CD4-positive, alpha-beta memory T cell (primary cell): ENCODE measurements at regions of chr19 and their contacts with region 1.

Region 1: DNA sequence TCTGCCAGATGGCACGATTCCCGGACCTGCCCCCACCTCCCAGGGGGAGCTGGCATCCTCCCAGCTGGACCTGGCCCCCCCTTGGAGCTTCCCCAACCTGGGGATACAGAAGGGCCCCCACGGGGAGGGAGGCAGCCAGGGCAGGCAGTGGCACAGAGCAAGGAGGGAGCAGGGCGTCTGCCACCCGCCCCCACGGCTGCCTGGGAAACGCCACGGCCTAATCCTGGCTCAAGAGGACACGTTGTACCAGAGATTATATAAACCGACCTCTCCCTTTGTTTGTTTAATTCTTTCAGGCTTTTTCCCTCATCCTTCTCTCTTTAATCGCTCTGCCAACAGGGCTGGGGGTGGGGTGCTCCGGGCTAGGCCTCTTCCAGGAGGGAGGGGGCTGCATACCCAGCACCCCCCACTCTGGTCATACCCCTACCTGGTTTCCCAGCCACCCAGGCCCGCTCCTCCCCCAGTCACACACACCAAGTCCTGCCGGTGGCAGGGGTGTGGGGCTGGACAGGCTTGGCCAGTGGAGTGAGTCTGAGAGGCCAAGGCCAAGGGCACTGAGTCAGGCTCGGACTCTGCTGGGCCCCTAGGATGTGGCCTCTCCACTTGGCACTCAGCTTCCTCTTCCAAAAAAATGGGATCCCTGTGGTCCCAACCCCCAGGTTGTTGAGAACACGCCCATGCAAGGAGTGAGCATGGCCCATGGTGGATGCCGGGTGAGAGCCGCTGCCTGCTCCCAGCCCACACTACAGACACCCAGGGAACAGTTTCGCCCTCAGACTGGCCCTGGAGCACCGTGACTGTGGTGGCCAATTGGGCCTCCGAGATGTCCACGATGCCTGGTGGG is 29.5 kb upstream of the NFIC start:
- DNase-seq: no peak
- H3K4me3 ChIP-seq: no peak overlapping the region
- H3K4me3 Mint-ChIP-seq: no peak overlapping the region
- H3K27ac ChIP-seq: no peak overlapping the region
- H3K27ac Mint-ChIP-seq: no peak overlapping the region
- H3K4me1 ChIP-seq: peaks cover 10% of the 10 kb centered on the region
- H3K4me1 Mint-ChIP-seq: peaks cover 4 to 21% (median 10%) of the 10 kb centered on the region in 4 donors
- H3K27me3 ChIP-seq: no peaks in the 10 kb centered on the region
- H3K27me3 Mint-ChIP-seq: no peaks in the 10 kb centered on the region

Region 2: GRCh38 chr19:3360421-3361383 is 23.8 kb after region 1 on chr19:
- CTCF ChIA-PET with region 1: no interaction called
- POLR2A ChIA-PET with region 1: interaction called, 9 read pairs
- intact Hi-C with region 1: loop called (anchors 2 kb)
- DNase-seq: peak; percentile 64 to 80 (median 71)
- H3K4me3 ChIP-seq: peak overlapping the region; percentile 36 to 66
- H3K4me3 Mint-ChIP-seq: peak overlapping the region; percentile 88 to 94 (median 92)
- H3K27ac ChIP-seq: peak overlapping the region; percentile 63
- H3K27ac Mint-ChIP-seq: peak overlapping the region; percentile 64 to 96 (median 86)
- H3K4me1 ChIP-seq: peaks cover 32% of the 10 kb centered on the region
- H3K4me1 Mint-ChIP-seq: peaks cover 27 to 64% (median 43%) of the 10 kb centered on the region in 4 donors
- H3K27me3 ChIP-seq: no peaks in the 10 kb centered on the region
- H3K27me3 Mint-ChIP-seq: no peaks in the 10 kb centered on the region

Region 3: DNA sequence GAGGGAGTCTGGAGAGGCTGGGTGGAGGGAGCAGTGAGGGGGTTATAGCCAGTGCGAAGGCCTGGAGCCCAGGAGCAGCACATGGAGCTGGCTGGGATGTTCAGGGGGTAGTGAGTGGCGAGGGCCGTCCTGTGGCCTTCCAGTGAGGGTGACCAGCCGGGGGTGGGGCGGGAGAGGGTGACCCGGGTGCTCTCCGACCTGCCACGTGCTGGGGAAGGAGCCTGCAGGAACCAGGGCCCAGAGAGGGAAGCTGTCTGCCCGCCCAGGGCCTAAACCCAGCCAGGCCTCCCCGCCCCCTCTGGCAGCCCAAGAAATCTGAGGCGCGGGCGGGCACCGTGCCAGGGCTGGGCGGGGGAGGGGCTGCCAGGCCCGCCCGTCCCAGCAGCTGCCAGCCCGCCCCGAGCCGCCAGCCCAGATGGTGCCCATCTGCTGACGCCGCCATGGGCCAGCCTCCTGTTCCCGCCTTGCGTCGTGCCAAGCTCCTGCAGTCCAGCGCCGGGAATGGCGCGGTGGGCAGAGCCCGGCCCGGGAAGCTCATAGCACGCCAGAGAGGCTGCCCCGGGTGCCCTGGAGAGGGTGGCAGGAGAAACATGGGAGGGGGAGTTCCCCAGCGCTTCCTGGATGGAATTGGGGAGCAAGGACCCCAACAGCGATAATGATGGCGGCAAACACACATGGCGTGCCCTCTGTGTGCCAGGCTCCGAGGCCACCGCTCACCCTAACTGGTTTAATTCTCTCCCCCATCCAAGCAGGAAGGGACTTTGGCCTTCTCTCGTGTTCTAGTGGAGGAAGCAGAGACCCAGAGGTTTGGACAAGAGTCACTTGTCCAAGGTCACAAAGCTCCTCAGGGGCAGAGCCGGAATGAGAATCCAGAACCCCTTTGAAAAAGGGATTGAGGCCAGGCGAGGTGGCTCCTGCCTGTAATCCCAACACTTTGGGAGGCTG is 51.0 kb after region 1 on chr19:
- CTCF ChIA-PET with region 1: no interaction called
- POLR2A ChIA-PET with region 1: no interaction called
- intact Hi-C with region 1: no loop called
- DNase-seq: no peak
- H3K4me3 ChIP-seq: no peak overlapping the region
- H3K4me3 Mint-ChIP-seq: no peak overlapping the region
- H3K27ac ChIP-seq: no peak overlapping the region
- H3K27ac Mint-ChIP-seq: peak overlapping the region in 2 of 7 donors; percentile 12 to 60
- H3K4me1 ChIP-seq: peaks cover 5% of the 10 kb centered on the region
- H3K4me1 Mint-ChIP-seq: peaks cover 10 to 26% (median 17%) of the 10 kb centered on the region in 4 donors
- H3K27me3 ChIP-seq: no peaks in the 10 kb centered on the region
- H3K27me3 Mint-ChIP-seq: no peaks in the 10 kb centered on the region